ENCODE measurements at regions of chrX and their contacts with region 1.

Region 1: GRCh38 chrX:71622576-71623450 is 4.5 kb upstream of the CXCR3 start:
- DNase-seq: peak; percentile 88
- H3K4me3 Mint-ChIP-seq: peak overlapping the region; percentile 26
- H3K27ac Mint-ChIP-seq: peak overlapping the region; percentile 86
- H3K4me1 Mint-ChIP-seq: peaks cover 59% of the 10 kb centered on the region
- H3K27me3 Mint-ChIP-seq: no peaks in the 10 kb centered on the region

Region 2: DNA sequence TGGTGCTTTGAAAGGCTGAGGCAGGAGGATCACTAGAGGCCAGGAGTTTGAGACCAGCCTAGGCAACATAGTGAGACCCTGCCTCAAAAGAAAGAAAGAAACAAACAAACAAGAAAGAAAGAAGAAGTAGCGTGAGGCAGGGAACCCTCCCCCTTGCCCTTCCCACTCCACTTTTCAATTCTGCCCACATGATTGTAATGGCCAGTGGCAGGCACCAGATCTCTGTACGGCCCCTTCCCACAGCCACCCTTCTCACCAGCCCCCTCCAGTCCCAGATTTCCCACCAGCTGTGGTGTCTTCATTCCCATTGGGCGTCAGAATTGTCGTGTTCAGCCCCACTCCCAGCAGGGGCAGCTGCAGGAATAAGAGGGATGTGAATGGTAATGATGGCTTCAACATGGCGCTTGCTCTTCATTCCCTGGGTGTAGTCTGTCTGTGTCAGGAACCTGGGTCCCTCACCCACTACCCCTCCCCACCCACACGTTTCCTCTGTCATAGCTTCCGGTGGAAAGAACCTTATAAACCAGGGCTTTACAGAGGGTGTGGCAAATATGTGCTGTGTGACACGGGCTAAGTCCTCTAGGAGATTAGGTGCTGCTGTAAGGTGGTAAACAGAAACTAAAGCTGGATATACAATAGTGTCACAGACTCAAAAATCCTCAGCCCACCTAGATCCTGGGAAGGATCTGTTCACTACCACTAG is 511.5 kb before region 1 on chrX and contains the start of gene IL2RG:
- CTCF ChIA-PET with region 1: no interaction called
- intact Hi-C with region 1: loop called (anchors 2 kb)
- DNase-seq: peak; percentile 87
- H3K4me3 Mint-ChIP-seq: peak within 1 kb of the TSS; percentile 93
- H3K27ac Mint-ChIP-seq: peak within 1 kb of the TSS; percentile 95
- H3K4me1 Mint-ChIP-seq: peaks cover 37% of the 10 kb centered on the region
- H3K27me3 Mint-ChIP-seq: no peaks in the 10 kb centered on the region
- total RNA-seq, gene IL2RG: 144 to 148 TPM

Region 3: GRCh38 chrX:71541210-71542022 is 81.4 kb before region 1 on chrX:
- CTCF ChIA-PET with region 1: no interaction called
- intact Hi-C with region 1: loop called (anchors 1 kb)
- DNase-seq: peak; percentile 39
- H3K4me3 Mint-ChIP-seq: peak overlapping the region; percentile 96
- H3K27ac Mint-ChIP-seq: peak overlapping the region; percentile 93
- H3K4me1 Mint-ChIP-seq: peaks cover 60% of the 10 kb centered on the region
- H3K27me3 Mint-ChIP-seq: no peaks in the 10 kb centered on the region

Region 4: DNA sequence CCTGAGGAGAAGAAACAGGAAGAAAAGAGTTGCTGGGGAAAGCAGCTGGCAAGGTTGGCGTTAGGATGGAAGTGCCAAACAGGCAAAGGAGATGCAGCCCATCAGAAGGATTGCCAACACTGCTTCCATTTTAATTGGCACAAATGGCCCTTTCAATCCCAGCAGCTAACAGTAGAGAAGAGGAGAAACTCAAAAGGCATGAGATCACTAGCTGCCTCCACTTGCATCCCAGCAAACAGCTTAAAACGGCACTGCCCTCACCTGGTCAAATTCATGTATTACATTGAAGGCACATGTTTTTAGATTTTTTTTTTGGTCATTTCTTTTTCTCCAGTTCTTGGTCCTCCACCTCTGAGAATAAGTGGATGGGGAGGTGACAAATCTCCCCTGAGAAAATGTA is 29.6 kb after region 1 on chrX:
- CTCF ChIA-PET with region 1: interaction called, 14 read pairs
- intact Hi-C with region 1: loop called (anchors 1 kb)
- DNase-seq: peak; percentile 78
- H3K4me3 Mint-ChIP-seq: no peak overlapping the region
- H3K27ac Mint-ChIP-seq: no peak overlapping the region
- H3K4me1 Mint-ChIP-seq: peaks cover 10% of the 10 kb centered on the region
- H3K27me3 Mint-ChIP-seq: no peaks in the 10 kb centered on the region